Activated B cell treated with CpG ODN at 0.5 μM for 24 hours (primary cell): ENCODE measurements at regions of chr15 and their contacts with region 1.

Region 1: GRCh38 chr15:57070651-57071050 is 152.2 kb downstream of the TCF12 start:
- DNase-seq: no peak
- ATAC-seq: no peak
- H3K4me3 Mint-ChIP-seq: no peak overlapping the region
- H3K27ac Mint-ChIP-seq: no peak overlapping the region
- H3K4me1 Mint-ChIP-seq: peaks cover 44% of the 10 kb centered on the region
- H3K27me3 Mint-ChIP-seq: no peaks in the 10 kb centered on the region
- CTCF ChIP-seq: no peak

Region 2: DNA sequence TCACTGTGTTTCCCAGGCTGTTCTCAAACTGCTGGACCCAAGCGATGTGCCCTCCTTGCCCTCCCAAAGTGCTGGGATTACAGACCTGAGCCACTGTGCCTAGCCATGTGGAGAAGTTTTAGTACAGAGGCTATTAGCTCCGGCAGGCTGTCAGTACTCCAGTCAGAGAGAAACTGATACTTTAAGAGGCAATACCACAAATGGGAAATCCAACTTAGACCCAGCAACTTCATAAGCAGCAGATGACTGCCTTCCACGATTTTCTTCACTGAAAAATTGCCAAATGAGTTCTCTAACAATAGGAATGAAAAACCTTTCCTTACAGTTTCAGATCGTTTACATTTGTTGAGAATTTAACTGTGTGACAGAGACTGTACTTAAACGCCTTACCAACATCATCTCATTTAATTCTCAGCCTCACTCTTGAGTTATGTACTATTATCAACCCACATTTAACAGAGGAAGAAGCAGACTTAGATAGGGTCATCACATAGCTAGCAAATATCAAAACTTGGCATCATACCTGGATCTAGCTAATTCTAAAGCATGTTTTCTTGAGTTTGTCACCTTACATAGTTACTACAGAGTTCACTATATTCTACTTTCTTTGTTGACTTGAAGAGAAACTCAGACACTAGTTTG is 24.8 kb before region 1 on chr15:
- CTCF ChIA-PET with region 1: no interaction called
- POLR2A ChIA-PET with region 1: no interaction called
- intact Hi-C with region 1: loop called (anchors 2 kb)
- DNase-seq: no peak
- ATAC-seq: peak; percentile 42
- H3K4me3 Mint-ChIP-seq: no peak overlapping the region
- H3K27ac Mint-ChIP-seq: no peak overlapping the region
- H3K4me1 Mint-ChIP-seq: peaks cover 36% of the 10 kb centered on the region
- H3K27me3 Mint-ChIP-seq: no peaks in the 10 kb centered on the region
- CTCF ChIP-seq: no peak

Region 3: GRCh38 chr15:57100136-57100539 is 29.5 kb after region 1 on chr15:
- CTCF ChIA-PET with region 1: no interaction called
- POLR2A ChIA-PET with region 1: no interaction called
- intact Hi-C with region 1: no loop called
- DNase-seq: no peak
- ATAC-seq: peak; percentile 78
- H3K4me3 Mint-ChIP-seq: peak overlapping the region; percentile 64
- H3K27ac Mint-ChIP-seq: peak overlapping the region; percentile 83
- H3K4me1 Mint-ChIP-seq: peaks cover 50% of the 10 kb centered on the region
- H3K27me3 Mint-ChIP-seq: no peaks in the 10 kb centered on the region
- CTCF ChIP-seq: no peak

Region 4: DNA sequence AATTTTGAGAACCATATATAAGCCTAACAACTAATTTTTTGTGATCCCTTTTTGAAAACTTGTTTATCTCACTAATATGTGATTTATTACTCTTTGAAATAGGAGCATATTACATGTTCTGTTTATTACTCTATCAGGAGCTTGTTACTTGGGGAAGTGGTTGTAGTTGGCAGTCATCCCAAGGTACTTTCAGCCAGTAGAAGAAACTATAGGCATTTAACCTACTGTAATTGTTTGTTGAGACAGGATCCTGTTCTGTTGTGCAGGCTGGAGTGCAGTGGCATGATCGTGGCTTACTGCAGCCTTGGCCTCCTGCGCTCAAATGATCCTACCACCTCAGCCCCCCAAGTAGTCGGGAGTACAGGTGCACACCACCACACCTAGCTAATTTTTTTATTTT is 43.4 kb after region 1 on chr15:
- CTCF ChIA-PET with region 1: no interaction called
- POLR2A ChIA-PET with region 1: no interaction called
- intact Hi-C with region 1: loop called (anchors 5 kb)
- DNase-seq: no peak
- ATAC-seq: no peak
- H3K4me3 Mint-ChIP-seq: no peak overlapping the region
- H3K27ac Mint-ChIP-seq: no peak overlapping the region
- H3K4me1 Mint-ChIP-seq: peaks cover 25% of the 10 kb centered on the region
- H3K27me3 Mint-ChIP-seq: no peaks in the 10 kb centered on the region
- CTCF ChIP-seq: no peak